Activated T-helper 1 cell treated with anti-CD3 and anti-CD28 coated beads, Interleukin-12 subunit alpha, Interleukin-12 subunit beta, Interleukin-2, Interleukin-4 antibody, amounts not matched to agents 30 ng/mL and 10 ng/mL and 1 ng/mL, durations not matched to agents 14 hours and 24 hours and 36 hours (primary cell): ENCODE measurements at regions of chrX and their contacts with region 1.

Region 1: DNA sequence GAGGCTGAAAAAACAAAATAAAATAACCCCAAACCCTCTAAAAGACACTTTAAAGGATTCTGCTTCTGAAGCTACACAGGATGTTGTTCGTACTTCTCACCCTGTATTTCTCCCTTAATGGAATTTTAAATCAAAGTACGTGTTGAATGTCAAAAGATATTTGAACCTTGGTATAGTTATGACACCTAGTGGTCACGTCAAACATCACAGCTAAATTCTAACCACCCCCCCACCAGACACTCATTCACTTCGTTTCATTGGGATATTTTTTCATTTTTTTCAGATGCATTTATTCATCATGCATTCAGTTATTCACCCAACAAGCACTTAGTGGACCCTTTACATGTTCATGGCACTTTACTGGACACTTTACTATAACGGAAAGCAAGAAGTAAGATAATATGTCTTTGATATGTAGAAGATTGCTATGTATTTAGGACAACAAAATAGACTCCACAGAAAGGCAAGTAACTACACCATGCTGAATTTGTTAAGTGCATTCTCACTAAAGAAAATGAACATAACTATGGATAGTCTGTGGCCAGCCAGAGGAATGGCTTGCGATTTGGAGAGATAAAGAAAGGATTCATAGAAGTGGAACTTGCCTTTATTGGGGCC is 62.5 kb upstream of the GPR174 start:
- DNase-seq: peak; percentile 5
- H3K4me3 Mint-ChIP-seq: peak overlapping the region; percentile 59
- H3K27ac Mint-ChIP-seq: peak overlapping the region; percentile 70
- H3K4me1 Mint-ChIP-seq: peaks cover 39% of the 10 kb centered on the region
- H3K27me3 Mint-ChIP-seq: no peaks in the 10 kb centered on the region

Region 2: GRCh38 chrX:78333521-78333920 is 748.5 kb before region 1 on chrX:
- intact Hi-C with region 1: loop called (anchors 5 kb)
- DNase-seq: peak; percentile 33
- H3K4me3 Mint-ChIP-seq: peak overlapping the region; percentile 53
- H3K27ac Mint-ChIP-seq: peak overlapping the region; percentile 93
- H3K4me1 Mint-ChIP-seq: peaks cover 73% of the 10 kb centered on the region
- H3K27me3 Mint-ChIP-seq: no peaks in the 10 kb centered on the region

Region 3: DNA sequence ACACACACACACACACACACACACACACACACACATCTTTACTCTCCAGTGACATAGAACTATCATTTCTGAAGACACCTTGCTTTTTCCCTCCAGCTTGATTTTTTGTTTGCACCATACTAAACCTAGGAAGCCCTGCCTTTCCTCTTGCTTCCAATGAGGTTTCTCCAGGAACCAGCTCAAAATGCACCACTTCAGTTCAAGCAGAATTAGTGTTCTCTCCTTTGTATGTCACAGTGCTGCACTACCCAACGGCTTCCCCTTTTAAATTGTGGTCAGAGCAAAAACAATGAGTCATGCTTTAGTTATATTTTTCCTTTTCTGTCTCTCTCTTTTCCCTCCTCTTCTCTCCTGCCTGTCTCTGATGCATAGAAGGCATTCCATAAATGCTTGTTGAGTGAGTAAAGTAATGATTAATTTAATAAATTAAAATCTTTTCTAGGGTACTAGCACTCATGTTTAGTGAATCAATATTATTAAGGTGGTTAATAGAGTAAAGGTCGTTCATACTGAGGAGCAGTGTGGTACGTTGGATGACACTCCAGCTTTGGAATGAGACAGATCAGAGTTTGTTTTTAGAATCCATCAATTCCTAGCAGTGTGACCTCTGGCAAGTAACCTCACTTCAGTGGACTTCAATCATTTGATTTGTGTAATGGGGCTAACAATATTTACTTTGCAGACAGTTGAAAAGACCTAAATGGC is 428.7 kb before region 1 on chrX:
- intact Hi-C with region 1: loop called (anchors 5 kb)
- DNase-seq: no peak
- H3K4me3 Mint-ChIP-seq: peak overlapping the region; percentile 55
- H3K27ac Mint-ChIP-seq: peak overlapping the region; percentile 49
- H3K4me1 Mint-ChIP-seq: peaks cover 38% of the 10 kb centered on the region
- H3K27me3 Mint-ChIP-seq: no peaks in the 10 kb centered on the region

Region 4: DNA sequence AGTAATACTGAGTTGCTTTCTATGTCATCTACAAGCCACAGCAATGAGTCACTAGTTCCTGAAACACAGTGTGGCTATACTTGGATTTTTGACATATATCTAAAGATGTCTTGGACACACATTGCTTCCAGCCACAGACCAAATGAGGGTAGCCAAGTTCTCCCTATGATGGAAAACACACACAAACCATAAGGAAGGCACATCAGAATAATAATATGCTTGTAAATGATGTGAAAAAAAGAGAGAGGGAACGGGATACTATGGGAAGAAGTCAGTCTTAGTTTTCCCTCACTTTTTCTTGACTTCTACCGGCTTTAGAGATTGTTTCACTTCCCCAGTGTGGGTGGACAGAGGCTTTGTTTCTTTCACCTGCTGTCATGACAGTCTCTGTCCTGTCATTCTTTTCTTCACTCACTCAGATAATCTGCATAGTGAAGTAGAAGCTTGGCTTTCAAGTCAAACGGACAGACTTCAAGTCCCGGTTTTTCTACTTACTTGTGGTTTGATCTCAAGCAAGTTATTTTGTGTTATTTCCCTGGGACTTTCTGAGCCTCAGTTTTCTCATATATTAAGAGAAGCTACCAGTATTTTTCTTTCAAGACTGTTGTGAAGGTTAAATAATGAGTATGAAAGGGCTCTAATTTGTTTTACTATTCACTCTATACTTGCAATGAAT is 102.1 kb before region 1 on chrX:
- intact Hi-C with region 1: loop called (anchors 1 kb)
- DNase-seq: no peak
- H3K4me3 Mint-ChIP-seq: peak overlapping the region; percentile 67
- H3K27ac Mint-ChIP-seq: peak overlapping the region; percentile 100
- H3K4me1 Mint-ChIP-seq: peaks cover 35% of the 10 kb centered on the region
- H3K27me3 Mint-ChIP-seq: no peaks in the 10 kb centered on the region

Region 5: DNA sequence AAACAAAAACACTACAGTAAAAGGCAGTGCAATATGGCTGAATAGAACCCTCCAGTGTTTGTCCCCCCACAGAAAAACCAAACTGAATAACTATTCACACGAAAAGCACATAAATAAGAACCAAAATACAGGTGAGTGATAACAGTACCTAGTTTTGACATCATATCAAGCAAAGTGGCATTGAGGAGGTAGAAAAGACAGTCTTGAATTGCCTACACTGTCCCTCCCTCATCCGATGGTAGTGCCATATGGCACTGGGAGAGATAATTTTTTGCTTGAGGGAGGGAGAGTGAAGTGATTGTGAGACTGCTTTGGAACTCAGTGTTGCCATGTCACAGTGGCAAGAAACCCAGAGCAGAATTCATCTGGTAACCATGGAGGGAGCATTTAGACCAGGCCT is 161.7 kb after region 1 on chrX:
- intact Hi-C with region 1: no loop called
- DNase-seq: no peak
- H3K4me3 Mint-ChIP-seq: no peak overlapping the region
- H3K27ac Mint-ChIP-seq: no peak overlapping the region
- H3K4me1 Mint-ChIP-seq: peaks cover 15% of the 10 kb centered on the region
- H3K27me3 Mint-ChIP-seq: no peaks in the 10 kb centered on the region

Region 6: DNA sequence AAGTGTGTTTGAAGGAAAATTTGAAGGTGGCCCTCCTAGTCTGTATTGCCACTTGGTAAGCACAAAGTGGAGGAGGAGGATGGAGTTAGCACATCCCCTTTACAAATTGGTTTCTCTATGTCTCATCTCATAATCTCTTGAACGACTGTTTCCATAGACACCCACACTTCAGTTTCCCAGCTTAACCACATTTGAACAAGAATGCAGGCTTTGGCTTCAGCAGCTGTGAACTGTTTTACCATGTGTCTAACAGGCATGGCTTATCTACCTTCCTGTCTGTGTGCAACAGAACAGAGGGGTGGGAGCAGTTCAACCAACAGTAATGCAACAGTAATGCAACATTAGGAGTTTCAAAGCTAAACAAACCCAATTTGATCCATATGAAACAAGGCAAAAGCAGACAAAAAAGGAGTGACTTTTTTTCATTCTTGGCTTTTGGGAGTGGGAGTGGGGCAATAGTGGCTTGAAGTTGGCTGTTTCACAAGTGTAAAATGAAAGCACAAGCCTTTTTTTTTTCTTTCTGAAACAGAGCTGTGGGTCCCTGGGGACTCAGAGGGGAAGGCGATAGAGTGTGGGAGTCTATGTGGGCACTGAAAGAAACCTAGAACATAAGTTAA is 177.2 kb after region 1 on chrX:
- intact Hi-C with region 1: loop called (anchors 5 kb)
- DNase-seq: peak; percentile 57
- H3K4me3 Mint-ChIP-seq: peak overlapping the region; percentile 45
- H3K27ac Mint-ChIP-seq: peak overlapping the region; percentile 87
- H3K4me1 Mint-ChIP-seq: peaks cover 86% of the 10 kb centered on the region
- H3K27me3 Mint-ChIP-seq: no peaks in the 10 kb centered on the region

Region 7: DNA sequence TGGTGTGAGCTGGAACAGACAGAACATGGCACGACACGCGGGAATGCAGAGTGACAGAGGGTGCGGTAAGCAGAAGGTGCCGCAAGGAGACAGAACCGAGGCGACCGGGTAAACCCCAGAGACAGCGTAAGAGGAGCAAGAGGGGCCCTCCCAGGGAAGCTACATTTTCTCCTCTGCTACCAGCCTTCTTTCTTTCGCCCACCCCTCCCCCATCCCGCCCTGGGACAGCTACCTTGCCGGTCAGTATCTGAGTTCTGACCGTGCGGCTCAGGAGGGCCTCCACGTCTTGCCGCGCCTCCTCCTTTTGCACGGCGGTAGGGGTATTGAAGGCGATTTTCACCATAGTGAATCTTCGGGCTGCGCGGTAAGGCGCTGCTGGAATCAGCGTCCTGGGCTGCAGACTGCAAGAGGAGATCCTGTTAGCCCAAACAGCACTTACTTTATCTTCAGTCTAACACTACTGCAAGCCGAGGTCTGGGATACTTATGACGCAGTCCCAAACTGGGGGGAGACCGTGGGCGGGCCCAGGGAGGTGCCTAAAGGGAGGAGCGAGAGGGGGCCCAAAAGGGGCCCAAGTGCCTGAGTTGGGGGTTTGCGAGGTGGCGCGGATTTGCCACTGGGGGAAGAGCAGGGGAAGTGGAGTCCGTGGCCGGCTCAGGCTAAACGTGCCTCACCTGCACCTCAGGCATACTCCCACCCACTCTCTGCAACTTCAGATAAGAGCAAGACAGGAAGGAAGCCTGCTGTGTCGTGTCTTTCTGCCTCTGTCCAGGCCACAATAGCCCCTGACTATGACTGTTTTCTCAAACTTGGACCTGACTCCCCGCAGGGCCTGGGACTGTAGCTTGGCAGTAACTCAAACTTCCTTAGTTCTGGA is 285.1 kb after region 1 on chrX and contains the start of gene ITM2A:
- intact Hi-C with region 1: loop called (anchors 5 kb)
- DNase-seq: peak; percentile 37
- H3K4me3 Mint-ChIP-seq: peak within 1 kb of the TSS; percentile 94
- H3K27ac Mint-ChIP-seq: peak within 1 kb of the TSS; percentile 95
- H3K4me1 Mint-ChIP-seq: peaks cover 35% of the 10 kb centered on the region
- H3K27me3 Mint-ChIP-seq: no peaks in the 10 kb centered on the region
- total RNA-seq, gene ITM2A: 114 and 116 TPM in 2 replicates